WTC11 (cell line): ENCODE measurements at regions of chr16 and their contacts with region 1.

Region 1: GRCh38 chr16:11396241-11397048 is 51.2 kb downstream of the RMI2 start:
- DNase-seq: peak; percentile 93
- ATAC-seq: peak; percentile 80
- H3K4me3 Mint-ChIP-seq: no peak overlapping the region
- H3K27ac Mint-ChIP-seq: peak overlapping the region; percentile 41; the same call in 1 of the 2 replicates
- H3K4me1 Mint-ChIP-seq: peaks cover 8% of the 10 kb centered on the region; the same call in 1 of the 2 replicates
- H3K27me3 Mint-ChIP-seq: no peaks in the 10 kb centered on the region
- CTCF ChIP-seq: peak; percentile 100

Region 2: GRCh38 chr16:10971560-10971961 is 424.9 kb before region 1 on chr16:
- CTCF ChIA-PET with region 1: interaction called, 10 read pairs
- POLR2A ChIA-PET with region 1: no interaction called
- DNase-seq: peak; percentile 46
- ATAC-seq: peak; percentile 90
- H3K4me3 Mint-ChIP-seq: no peak overlapping the region
- H3K27ac Mint-ChIP-seq: no peak overlapping the region
- H3K4me1 Mint-ChIP-seq: peaks cover 5% of the 10 kb centered on the region
- H3K27me3 Mint-ChIP-seq: no peaks in the 10 kb centered on the region
- CTCF ChIP-seq: peak; percentile 43

Region 3: DNA sequence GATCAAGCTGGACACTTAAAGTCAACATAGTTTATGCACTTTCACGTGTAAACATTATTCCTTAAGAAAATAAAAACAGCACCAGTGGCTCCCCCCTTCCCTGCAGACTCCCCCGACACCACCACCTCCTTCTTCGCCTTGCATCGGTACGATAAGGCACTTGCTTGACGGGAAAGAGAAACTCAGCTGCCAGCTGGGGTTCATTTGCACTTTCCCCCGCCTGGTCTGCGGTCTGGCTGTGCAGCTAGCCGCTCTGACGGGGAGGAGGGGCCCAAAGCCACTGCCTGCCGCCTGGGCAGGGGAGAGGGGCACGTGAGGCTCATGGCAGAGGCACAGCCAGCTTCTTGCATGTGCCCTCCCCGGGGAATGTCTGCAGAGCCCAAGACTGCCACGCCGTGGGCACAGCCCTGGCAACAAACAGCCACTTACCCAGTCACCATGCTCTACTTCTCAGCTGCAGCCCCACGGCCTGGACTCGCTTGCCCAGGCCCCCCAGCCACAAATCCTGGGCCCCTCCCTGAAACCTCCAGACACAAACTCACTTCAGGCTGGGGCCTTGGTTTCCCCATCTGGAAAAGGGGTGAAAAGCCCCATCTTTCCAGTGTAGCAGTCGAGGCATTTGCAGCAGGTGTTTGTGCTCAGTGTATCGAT is 98.8 kb before region 1 on chr16:
- CTCF ChIA-PET with region 1: no interaction called
- POLR2A ChIA-PET with region 1: no interaction called
- DNase-seq: peak; percentile 69
- ATAC-seq: peak; percentile 87
- H3K4me3 Mint-ChIP-seq: no peak overlapping the region
- H3K27ac Mint-ChIP-seq: no peak overlapping the region
- H3K4me1 Mint-ChIP-seq: peaks cover 33% of the 10 kb centered on the region
- H3K27me3 Mint-ChIP-seq: no peaks in the 10 kb centered on the region; the same call in 1 of the 2 replicates
- CTCF ChIP-seq: no peak

Region 4: DNA sequence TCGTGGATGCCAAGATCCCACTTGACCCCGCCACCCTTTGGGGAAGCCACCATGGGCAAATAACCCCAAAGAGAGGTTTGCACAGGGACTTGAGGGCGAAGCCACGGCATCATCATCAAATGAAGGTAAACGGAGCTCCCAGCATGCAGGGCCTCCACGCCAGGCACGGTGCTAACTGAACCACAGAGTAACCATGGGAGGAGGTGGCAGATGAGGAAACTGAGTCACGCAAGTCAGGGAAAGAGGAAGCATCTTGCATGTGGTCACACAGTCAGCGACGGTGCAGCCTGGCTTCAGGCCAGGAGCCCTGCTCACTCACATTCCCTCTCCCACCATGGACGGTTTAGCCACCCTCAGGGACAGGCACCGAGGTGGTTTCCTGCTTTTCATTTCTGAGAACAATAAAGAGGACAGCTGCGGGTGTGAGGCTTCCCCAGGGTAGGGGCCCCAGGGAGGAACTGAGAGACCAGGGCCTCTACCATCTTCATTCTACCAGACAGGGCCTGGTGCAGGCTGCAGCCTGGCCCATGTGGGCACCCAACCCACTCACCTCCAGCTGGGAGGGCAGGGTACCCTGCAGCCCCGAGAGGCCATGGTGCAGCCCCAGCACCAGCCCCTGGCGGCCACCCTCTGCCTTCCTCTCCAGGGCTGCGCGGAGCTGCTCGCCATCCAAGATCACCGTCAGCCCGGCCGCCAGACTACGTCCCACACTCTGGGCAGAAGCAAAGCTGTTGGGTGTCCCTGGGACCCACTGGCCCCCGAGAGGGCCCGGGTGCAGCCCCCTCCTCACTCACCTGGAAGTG is 27.1 kb after region 1 on chr16:
- CTCF ChIA-PET with region 1: interaction called, 13 read pairs
- POLR2A ChIA-PET with region 1: no interaction called
- DNase-seq: no peak
- ATAC-seq: no peak
- H3K4me3 Mint-ChIP-seq: no peak overlapping the region
- H3K27ac Mint-ChIP-seq: no peak overlapping the region
- H3K4me1 Mint-ChIP-seq: peaks cover 11% of the 10 kb centered on the region
- H3K27me3 Mint-ChIP-seq: no peaks in the 10 kb centered on the region
- CTCF ChIP-seq: no peak

Region 5: DNA sequence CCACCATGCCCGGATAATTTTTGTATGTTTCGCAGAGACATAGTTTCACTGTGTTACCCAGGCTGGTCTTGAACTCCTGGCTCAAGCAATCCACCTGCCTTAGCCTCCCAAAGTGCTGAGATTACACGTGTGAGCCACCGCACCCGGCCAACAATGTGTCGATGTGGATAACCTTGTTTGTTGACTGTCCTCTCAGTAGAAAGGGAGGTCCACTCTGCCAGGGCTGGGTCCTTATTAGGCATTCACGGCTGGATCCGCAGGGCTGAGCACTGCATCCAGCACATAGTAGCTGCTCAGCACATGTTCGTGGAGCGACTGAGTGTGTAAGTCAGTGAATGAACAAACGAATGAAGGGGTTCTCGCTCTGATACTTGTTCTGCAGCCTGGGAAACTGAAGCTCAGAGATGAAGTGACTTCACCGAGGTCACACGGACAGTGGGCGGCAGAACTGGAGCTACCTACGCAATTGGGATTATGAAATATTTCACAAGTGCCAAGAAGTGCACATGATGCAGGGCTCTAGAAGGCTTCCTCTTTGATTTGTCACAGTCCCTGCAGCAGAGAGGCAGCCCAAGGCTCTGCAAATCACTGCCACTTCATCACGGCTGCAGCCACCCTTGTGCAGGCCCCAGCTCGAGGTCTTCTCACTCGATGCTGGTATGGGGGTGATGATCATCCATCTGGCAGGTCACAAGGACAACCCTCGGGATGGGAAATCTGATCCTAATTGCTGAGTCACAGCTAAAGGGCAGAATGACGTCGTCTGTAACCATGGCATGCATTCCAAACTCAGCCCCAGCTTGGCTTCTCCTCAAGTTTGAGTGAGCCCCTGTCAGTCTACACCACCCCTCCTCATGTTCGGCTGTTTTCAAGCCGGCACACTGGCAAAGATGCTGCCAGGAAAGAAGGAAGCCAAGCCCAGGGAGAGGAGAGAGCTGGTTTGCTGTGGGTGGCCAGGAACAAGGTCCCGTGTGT is 243.8 kb after region 1 on chr16:
- CTCF ChIA-PET with region 1: interaction called, 16 read pairs
- POLR2A ChIA-PET with region 1: no interaction called
- DNase-seq: no peak
- ATAC-seq: no peak
- H3K4me3 Mint-ChIP-seq: no peak overlapping the region
- H3K27ac Mint-ChIP-seq: no peak overlapping the region; the same call in 1 of the 2 replicates
- H3K4me1 Mint-ChIP-seq: peaks cover 30% of the 10 kb centered on the region
- H3K27me3 Mint-ChIP-seq: peaks cover 6% of the 10 kb centered on the region; the same call in 1 of the 2 replicates
- CTCF ChIP-seq: no peak

Region 6: GRCh38 chr16:11681556-11681955 is 285.1 kb after region 1 on chr16:
- CTCF ChIA-PET with region 1: interaction called, 13 read pairs
- POLR2A ChIA-PET with region 1: no interaction called
- DNase-seq: no peak
- ATAC-seq: no peak
- H3K4me3 Mint-ChIP-seq: no peak overlapping the region
- H3K27ac Mint-ChIP-seq: no peak overlapping the region
- H3K4me1 Mint-ChIP-seq: peaks cover 28% of the 10 kb centered on the region
- H3K27me3 Mint-ChIP-seq: no peaks in the 10 kb centered on the region
- CTCF ChIP-seq: no peak

Region 7: DNA sequence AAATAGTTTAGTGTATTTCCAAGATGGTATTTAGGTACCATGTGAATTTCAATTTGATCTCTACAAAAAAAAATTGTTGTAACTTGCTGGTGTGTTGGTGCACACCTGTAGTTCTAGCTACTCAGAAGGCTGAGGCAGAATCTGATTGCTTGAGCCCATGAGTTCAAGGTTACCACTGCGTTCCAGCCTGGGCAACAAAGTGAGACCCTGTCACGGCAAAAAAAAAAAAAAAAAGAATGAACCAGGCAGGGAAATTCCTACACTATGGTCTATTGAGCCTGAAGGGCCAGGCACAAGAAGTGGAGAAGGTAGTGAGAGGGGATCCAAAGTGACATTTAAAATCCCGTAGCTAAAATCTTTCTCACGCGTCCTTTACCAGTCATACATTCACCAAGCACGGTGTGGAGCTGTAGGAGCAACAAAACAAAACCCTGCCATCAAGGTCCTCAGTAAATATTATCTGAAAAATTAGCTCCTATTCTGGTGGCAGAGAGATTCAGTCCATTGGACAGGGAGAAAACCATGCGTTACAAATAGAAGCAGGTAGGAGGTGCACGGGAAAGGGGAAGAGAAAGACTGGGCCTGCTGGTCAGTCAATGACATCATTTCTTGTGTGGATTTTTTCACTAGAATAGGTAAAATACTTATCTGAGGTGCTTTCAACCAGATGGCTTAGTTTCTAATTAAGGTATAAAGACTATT is 319.0 kb after region 1 on chr16:
- CTCF ChIA-PET with region 1: interaction called, 53 read pairs
- POLR2A ChIA-PET with region 1: no interaction called
- DNase-seq: no peak
- ATAC-seq: no peak
- H3K4me3 Mint-ChIP-seq: no peak overlapping the region
- H3K27ac Mint-ChIP-seq: no peak overlapping the region
- H3K4me1 Mint-ChIP-seq: peaks cover 9% of the 10 kb centered on the region
- H3K27me3 Mint-ChIP-seq: no peaks in the 10 kb centered on the region
- CTCF ChIP-seq: no peak